ENCODE measurements at regions of chr11 and their contacts with region 1.

Region 1: GRCh38 chr11:125429166-125429707 is 66.8 kb downstream of the FEZ1 start:
- DNase-seq: peak in 4 of 5 donors; percentile 8 to 16 (median 14)
- H3K4me3 ChIP-seq: no peak overlapping the region
- H3K4me3 Mint-ChIP-seq: no peak overlapping the region
- H3K27ac ChIP-seq: no peak overlapping the region
- H3K27ac Mint-ChIP-seq: no peak overlapping the region
- H3K4me1 ChIP-seq: no peaks in the 10 kb centered on the region
- H3K4me1 Mint-ChIP-seq: peaks cover 0 to 5% (median 3%) of the 10 kb centered on the region in 4 donors
- H3K27me3 ChIP-seq: peaks cover 3% of the 10 kb centered on the region
- H3K27me3 Mint-ChIP-seq: peaks cover 10 to 27% of the 10 kb centered on the region in 2 donors

Region 2: GRCh38 chr11:125390946-125391345 is 38.3 kb before region 1 on chr11:
- CTCF ChIA-PET with region 1: no interaction called
- POLR2A ChIA-PET with region 1: no interaction called
- intact Hi-C with region 1: no loop called
- DNase-seq: no peak
- H3K4me3 ChIP-seq: no peak overlapping the region
- H3K4me3 Mint-ChIP-seq: no peak overlapping the region
- H3K27ac ChIP-seq: no peak overlapping the region
- H3K27ac Mint-ChIP-seq: no peak overlapping the region
- H3K4me1 ChIP-seq: no peaks in the 10 kb centered on the region
- H3K4me1 Mint-ChIP-seq: no peaks in the 10 kb centered on the region
- H3K27me3 ChIP-seq: peaks cover 4% of the 10 kb centered on the region
- H3K27me3 Mint-ChIP-seq: peaks cover 11 to 19% of the 10 kb centered on the region in 2 donors

Region 3: DNA sequence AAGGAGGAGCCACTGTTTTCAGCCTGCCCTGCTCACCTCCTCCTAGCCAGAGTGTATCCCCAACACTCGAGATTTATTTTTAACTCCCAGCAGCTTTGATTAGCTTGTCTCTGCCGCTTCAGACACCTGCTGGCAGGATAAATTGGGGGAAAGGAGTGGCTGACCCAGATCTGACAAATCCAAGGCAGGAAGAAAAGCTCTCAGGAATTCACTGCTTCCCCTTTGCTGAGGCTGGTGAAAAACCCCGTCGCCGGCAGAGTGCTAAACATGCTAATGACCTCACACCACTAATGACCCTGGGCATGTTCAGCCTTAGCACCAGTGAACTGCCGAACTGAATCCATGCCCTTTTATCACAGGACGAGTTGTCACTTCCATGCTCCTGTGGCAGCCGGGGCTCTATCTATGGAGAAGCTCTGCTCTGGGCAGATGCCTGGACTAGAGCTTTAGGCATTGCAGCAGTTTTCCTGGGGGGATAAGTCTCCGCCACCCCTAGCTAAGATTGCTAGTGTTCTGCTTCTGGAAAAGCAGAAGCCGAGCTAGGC is 14.6 kb after region 1 on chr11:
- CTCF ChIA-PET with region 1: interaction called, 12 read pairs
- POLR2A ChIA-PET with region 1: no interaction called
- intact Hi-C with region 1: no loop called
- DNase-seq: no peak
- H3K4me3 ChIP-seq: no peak overlapping the region
- H3K4me3 Mint-ChIP-seq: no peak overlapping the region
- H3K27ac ChIP-seq: no peak overlapping the region
- H3K27ac Mint-ChIP-seq: no peak overlapping the region
- H3K4me1 ChIP-seq: no peaks in the 10 kb centered on the region
- H3K4me1 Mint-ChIP-seq: no peaks in the 10 kb centered on the region
- H3K27me3 ChIP-seq: peaks cover 3% of the 10 kb centered on the region
- H3K27me3 Mint-ChIP-seq: peaks cover 18 to 30% of the 10 kb centered on the region in 2 donors

Region 4: DNA sequence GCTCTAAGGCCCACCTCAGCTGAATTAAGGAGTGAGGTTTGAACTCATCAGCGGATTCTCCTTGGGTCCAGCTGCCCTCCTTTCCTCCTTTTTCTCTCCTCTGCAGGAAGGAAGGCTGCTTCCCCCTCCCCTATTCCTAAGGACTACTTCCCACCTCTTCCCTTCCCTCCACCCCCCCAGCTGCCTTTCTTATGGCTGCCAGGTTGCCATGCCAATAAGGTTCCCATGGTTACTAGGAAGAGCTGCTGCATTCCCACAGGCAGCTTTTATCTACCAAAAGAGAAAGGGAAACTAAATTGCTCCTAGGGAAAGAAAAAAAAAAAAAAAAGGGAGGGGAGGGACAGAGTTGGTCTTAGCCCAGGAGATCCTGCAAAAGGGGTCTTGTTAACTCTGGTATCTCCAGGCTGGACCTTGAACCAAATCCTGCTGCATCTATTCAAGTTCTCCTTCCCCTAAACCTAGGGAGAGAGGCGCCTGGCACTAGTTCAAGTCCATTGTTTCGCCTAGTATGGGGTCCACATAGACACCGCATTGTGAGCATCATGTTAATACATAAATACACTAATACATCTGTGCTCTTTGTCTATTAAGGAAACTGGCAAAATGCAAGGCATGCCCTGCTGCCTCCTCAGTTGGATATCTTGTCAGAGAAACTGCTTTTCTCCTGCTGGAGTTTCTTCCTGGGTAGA is 88.0 kb after region 1 on chr11:
- CTCF ChIA-PET with region 1: no interaction called
- POLR2A ChIA-PET with region 1: no interaction called
- intact Hi-C with region 1: no loop called
- DNase-seq: no peak
- H3K4me3 ChIP-seq: no peak overlapping the region
- H3K4me3 Mint-ChIP-seq: peak overlapping the region in 2 of 8 donors; percentile 5 to 49
- H3K27ac ChIP-seq: no peak overlapping the region
- H3K27ac Mint-ChIP-seq: peak overlapping the region in 3 of 7 donors; percentile 24 to 55 (median 48)
- H3K4me1 ChIP-seq: peaks cover 27% of the 10 kb centered on the region
- H3K4me1 Mint-ChIP-seq: peaks cover 23 to 33% (median 26%) of the 10 kb centered on the region in 4 donors
- H3K27me3 ChIP-seq: no peaks in the 10 kb centered on the region
- H3K27me3 Mint-ChIP-seq: no peaks in the 10 kb centered on the region